Tibial artery (tissue), 4 donors: ENCODE measurements at regions of chr22 and their contacts with region 1.

Region 1: GRCh38 chr22:19970479-19971275 is 29.1 kb upstream of the TXNRD2 start:
- DNase-seq: peak; percentile 60 to 81
- H3K4me3 ChIP-seq: no peak overlapping the region
- H3K27ac ChIP-seq: peak overlapping the region; percentile 28 to 55
- H3K4me1 ChIP-seq: peaks cover 0 to 21% (median 6%) of the 10 kb centered on the region in 4 donors
- H3K27me3 ChIP-seq: no peaks in the 10 kb centered on the region
- CTCF ChIP-seq: peak; percentile 87 to 98

Region 2: GRCh38 chr22:20013382-20013871 is 42.8 kb after region 1 on chr22:
- intact Hi-C with region 1: loop called (anchors 1 kb)
- DNase-seq: peak in 1 of 2 donors; percentile 76
- H3K4me3 ChIP-seq: no peak overlapping the region
- H3K27ac ChIP-seq: no peak overlapping the region
- H3K4me1 ChIP-seq: peaks cover 0 to 42% (median 28%) of the 10 kb centered on the region in 4 donors
- H3K27me3 ChIP-seq: no peaks in the 10 kb centered on the region
- CTCF ChIP-seq: peak; percentile 91 to 97